GM12878 (cell line): ENCODE measurements at regions of chr4 and their contacts with region 1.

Region 1: DNA sequence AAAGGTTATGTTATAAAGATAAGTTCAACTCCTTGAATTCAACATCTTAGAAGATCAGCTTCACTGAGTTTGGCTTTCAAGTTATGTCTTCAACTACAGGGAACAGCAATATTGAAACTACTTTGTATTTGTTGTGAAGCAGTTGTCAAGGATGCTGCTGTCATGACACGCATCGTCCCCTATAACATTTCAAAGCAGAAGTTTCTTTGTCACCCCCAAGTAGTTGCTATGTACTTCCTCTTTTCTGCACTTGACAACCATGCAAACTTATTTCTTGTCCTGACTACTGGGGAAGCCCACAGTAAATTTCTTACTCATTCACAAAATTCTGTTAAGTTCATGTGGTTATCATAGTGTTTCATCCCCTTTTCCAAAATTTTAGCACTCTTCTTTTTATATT is 14.3 kb downstream of the ANTXR2 start:
- DNase-seq: peak; percentile 89
- ATAC-seq: peak; percentile 98
- H3K4me3 ChIP-seq: peak overlapping the region; percentile 42; the same call in 1 of the 2 replicates
- H3K27ac ChIP-seq: peak overlapping the region; percentile 54
- H3K4me1 ChIP-seq: peaks cover 13% of the 10 kb centered on the region
- H3K27me3 ChIP-seq: no peaks in the 10 kb centered on the region
- CTCF ChIP-seq: no peak
- EP300 ChIP-seq: peak; percentile 96 to 100
- POLR2A ChIP-seq: no peak
- RAD21 ChIP-seq: no peak

Region 2: DNA sequence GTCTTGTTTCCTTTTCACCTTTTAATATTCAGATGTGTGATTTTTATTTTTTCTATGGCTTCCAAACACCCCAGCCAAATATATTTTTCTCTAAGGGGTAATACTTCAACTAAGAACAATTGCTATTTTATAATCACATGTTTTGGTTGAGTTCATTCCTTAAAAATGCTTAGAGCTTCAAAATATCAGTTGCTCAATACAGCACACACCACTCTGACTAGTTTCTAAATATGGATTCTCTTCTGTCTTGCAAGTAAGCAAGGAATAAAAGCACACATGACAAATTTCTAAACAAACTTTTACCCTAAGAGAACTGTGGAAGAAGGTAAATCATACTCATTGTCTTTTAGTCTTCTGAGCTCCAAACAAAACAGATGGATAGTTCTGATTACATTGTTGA is 13.0 kb before region 1 on chr4:
- CTCF ChIA-PET with region 1: no interaction called
- POLR2A ChIA-PET with region 1: no interaction called
- RAD21 ChIA-PET with region 1: interaction called, 3 read pairs
- SMC1A ChIA-PET with region 1: interaction called, 23 read pairs
- in situ Hi-C with region 1: no loop called
- intact Hi-C with region 1: no loop called
- DNase-seq: no peak
- ATAC-seq: no peak
- H3K4me3 ChIP-seq: no peak overlapping the region
- H3K27ac ChIP-seq: no peak overlapping the region
- H3K4me1 ChIP-seq: no peaks in the 10 kb centered on the region
- H3K27me3 ChIP-seq: no peaks in the 10 kb centered on the region
- CTCF ChIP-seq: no peak
- EP300 ChIP-seq: no peak
- POLR2A ChIP-seq: no peak
- RAD21 ChIP-seq: no peak

Region 3: DNA sequence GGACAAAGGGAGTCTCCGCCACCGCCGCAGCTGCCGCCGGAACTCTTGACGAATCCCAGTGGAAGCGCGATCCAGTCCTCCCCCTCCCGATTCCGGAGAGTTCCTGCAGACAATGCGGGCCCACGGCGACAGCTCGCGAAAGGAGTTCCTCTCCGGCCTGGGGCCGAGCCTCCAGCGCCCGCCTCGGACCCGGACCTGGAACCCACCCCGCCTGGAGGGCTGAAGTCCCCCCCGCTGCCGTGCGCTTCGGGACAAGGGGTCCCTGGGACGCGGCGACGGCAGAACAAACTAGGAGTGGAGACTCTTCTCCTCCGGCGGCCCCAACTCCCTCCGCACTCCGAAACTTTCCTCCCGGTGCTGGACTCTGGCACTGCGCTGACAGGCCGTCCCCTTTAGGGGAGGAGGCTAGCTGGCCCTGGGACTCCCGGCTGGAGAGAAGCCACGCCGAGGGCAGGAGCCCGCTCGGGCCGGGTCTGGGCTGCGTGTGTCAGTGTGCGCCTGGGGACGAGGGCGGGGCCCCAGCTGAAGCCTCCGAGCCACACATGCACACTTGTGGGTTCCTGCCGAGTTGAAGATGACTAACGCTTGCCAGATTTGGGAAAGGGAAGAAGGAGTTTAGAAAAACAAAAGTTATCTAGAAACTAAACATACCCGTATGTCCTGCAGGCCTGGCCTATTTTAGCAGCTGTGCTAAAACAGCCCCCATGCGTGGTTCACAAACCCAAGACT is 14.2 kb after region 1 on chr4 and contains the start of gene ANTXR2:
- CTCF ChIA-PET with region 1: interaction called, 7 read pairs
- POLR2A ChIA-PET with region 1: interaction called, 9 read pairs
- RAD21 ChIA-PET with region 1: interaction called, 24 read pairs
- SMC1A ChIA-PET with region 1: interaction called, 21 read pairs
- in situ Hi-C with region 1: no loop called
- intact Hi-C with region 1: loop called (anchors 2 kb)
- DNase-seq: peak; percentile 41
- ATAC-seq: peak; percentile 81
- H3K4me3 ChIP-seq: peak within 1 kb of the TSS; percentile 95
- H3K27ac ChIP-seq: peak within 1 kb of the TSS; percentile 70
- H3K4me1 ChIP-seq: peaks cover 48% of the 10 kb centered on the region
- H3K27me3 ChIP-seq: no peaks in the 10 kb centered on the region
- CTCF ChIP-seq: no peak
- EP300 ChIP-seq: 0 out of 4 replicates have a peak, but pooled peaks of 1 of the 2 experiments have one; percentile 7
- POLR2A ChIP-seq: peak; percentile 69
- RAD21 ChIP-seq: no peak
- polyA plus RNA-seq, gene ANTXR2: 1.4 to 1.5 TPM

Region 4: GRCh38 chr4:80173401-80173800 is 114.7 kb after region 1 on chr4:
- CTCF ChIA-PET with region 1: no interaction called
- POLR2A ChIA-PET with region 1: no interaction called
- RAD21 ChIA-PET with region 1: interaction called, 4 read pairs
- SMC1A ChIA-PET with region 1: interaction called, 4 read pairs
- in situ Hi-C with region 1: no loop called
- intact Hi-C with region 1: loop called (anchors 5 kb)
- DNase-seq: no peak
- ATAC-seq: peak; percentile 97
- H3K4me3 ChIP-seq: no peak overlapping the region
- H3K27ac ChIP-seq: no peak overlapping the region
- H3K4me1 ChIP-seq: peaks cover 15% of the 10 kb centered on the region
- H3K27me3 ChIP-seq: no peaks in the 10 kb centered on the region
- CTCF ChIP-seq: no peak
- EP300 ChIP-seq: 0 out of 4 replicates have a peak, but pooled peaks of 1 of the 2 experiments have one; percentile 4
- POLR2A ChIP-seq: no peak
- RAD21 ChIP-seq: no peak